ENCODE measurements at regions of chr22 and their contacts with region 1.

Region 1: GRCh38 chr22:31107178-31107893 is at the start of gene SELENOM:
- H3K4me3 ChIP-seq: peak within 1 kb of the TSS; percentile 39
- H3K27ac ChIP-seq: peak within 1 kb of the TSS; percentile 40; the same call in 1 of the 2 replicates
- H3K4me1 ChIP-seq: peaks cover 4% of the 10 kb centered on the region; the same call in 1 of the 2 replicates
- CTCF ChIP-seq: peak; percentile 95

Region 2: GRCh38 chr22:30754971-30755756 is 352.2 kb before region 1 on chr22:
- CTCF ChIA-PET with region 1: no interaction called
- POLR2A ChIA-PET with region 1: no interaction called
- H3K4me3 ChIP-seq: no peak overlapping the region
- H3K27ac ChIP-seq: no peak overlapping the region
- H3K4me1 ChIP-seq: no peaks in the 10 kb centered on the region
- CTCF ChIP-seq: peak; percentile 45; the same call in 1 of the 2 replicates

Region 3: GRCh38 chr22:30968924-30969539 is 138.3 kb before region 1 on chr22 and contains the start of gene TUG1:
- CTCF ChIA-PET with region 1: interaction called, 5 read pairs
- POLR2A ChIA-PET with region 1: interaction called, 14 read pairs
- H3K4me3 ChIP-seq: peak within 1 kb of the TSS; percentile 82
- H3K27ac ChIP-seq: peak within 1 kb of the TSS; percentile 95
- H3K4me1 ChIP-seq: peaks cover 5% of the 10 kb centered on the region; the same call in 1 of the 2 replicates
- CTCF ChIP-seq: no peak

Region 4: GRCh38 chr22:31029276-31029675 is 78.1 kb before region 1 on chr22:
- CTCF ChIA-PET with region 1: no interaction called
- POLR2A ChIA-PET with region 1: no interaction called
- H3K4me3 ChIP-seq: no peak overlapping the region
- H3K27ac ChIP-seq: no peak overlapping the region
- H3K4me1 ChIP-seq: no peaks in the 10 kb centered on the region
- CTCF ChIP-seq: no peak

Region 5: DNA sequence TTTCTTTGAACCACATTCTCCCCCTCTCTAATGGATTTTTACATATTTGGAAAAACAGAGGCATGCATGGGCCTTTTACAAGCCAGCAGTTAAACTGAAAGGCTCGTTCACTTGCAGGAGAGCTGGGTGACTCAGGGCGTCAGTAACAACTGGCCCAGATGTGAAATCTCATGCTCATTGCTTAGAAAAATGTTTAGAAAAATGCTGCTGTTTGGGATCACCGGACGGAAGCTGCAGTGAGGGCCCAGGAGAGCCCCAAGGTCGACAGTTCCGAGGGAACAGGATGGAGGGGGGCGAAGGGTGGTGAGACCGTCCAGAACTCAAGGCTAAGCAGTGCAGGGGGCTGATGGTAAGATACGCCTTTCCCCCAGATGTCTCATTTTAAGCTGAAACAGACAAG is 67.9 kb before region 1 on chr22:
- CTCF ChIA-PET with region 1: no interaction called
- POLR2A ChIA-PET with region 1: no interaction called
- H3K4me3 ChIP-seq: no peak overlapping the region
- H3K27ac ChIP-seq: no peak overlapping the region
- H3K4me1 ChIP-seq: no peaks in the 10 kb centered on the region
- CTCF ChIP-seq: no peak

Region 6: DNA sequence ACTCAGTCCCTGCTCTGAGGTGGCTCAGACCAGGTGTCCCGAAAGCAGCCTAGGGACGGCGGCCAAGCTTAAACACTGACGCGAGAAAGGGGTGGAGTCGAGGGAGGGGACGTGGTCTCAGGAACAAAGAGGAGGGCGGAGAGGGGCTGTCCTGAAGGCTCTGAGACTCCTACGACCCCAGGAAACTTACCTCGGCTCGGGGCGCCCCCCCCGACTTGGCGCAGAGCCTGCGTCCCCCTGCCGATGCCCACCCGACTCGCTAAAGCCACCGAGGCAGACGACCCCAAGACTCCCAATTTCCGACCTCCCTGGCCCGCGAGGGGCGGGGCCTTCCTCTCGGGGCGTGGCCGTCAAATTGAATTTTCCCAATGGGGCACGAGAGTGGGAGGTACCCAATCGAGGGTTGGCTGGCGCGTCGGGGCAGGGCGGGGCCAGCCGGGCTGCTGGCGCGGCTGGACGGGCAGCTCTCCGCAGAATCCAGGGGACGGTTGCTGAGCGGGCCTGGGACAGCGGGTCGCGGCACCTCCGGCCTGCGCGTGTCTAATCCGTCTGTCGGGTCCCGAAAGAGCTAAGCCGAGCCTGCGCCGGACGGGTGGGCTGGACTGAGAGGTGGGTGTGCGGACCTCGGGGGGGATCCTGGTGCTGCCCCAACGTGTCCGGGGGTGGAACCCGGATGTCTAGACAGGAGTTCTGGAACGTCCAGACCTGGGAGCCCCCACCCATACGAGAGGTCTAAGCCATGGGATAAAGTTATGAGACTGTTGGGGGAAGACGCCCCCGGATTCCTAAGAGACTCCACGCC is 26.3 kb before region 1 on chr22 and contains the start of gene SMTN:
- CTCF ChIA-PET with region 1: interaction called, 3 read pairs
- POLR2A ChIA-PET with region 1: interaction called, 15 read pairs
- H3K4me3 ChIP-seq: peak within 1 kb of the TSS; percentile 60
- H3K27ac ChIP-seq: no peak within 1 kb of the TSS
- H3K4me1 ChIP-seq: peaks cover 3% of the 10 kb centered on the region; the same call in 1 of the 2 replicates
- CTCF ChIP-seq: no peak

Region 7: GRCh38 chr22:31096657-31097279 is 10.6 kb before region 1 on chr22:
- CTCF ChIA-PET with region 1: interaction called, 22 read pairs
- POLR2A ChIA-PET with region 1: interaction called, 5 read pairs
- H3K4me3 ChIP-seq: no peak overlapping the region
- H3K27ac ChIP-seq: no peak overlapping the region
- H3K4me1 ChIP-seq: no peaks in the 10 kb centered on the region
- CTCF ChIP-seq: no peak

Region 8: DNA sequence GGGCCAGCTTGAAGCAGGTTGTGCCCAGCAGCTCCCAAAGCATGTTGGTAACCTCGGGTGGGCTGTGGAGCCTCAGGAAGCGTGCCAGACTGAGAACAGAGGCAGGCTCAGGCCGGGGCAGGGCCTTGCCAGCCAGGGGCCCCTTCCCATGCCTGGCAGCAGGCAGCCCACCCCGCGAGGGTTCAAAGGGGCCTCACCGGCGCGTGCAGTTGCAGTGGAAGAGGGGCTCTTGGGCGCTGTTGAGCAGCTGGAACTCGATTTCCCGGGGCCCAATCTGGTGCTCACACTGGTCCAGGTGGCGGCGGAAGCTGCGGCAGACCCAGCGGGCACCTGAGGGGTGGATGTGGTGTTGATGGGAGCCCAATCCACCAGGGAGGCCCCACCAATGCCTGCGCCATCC is 29.4 kb after region 1 on chr22:
- CTCF ChIA-PET with region 1: interaction called, 10 read pairs
- POLR2A ChIA-PET with region 1: interaction called, 4 read pairs
- H3K4me3 ChIP-seq: no peak overlapping the region
- H3K27ac ChIP-seq: no peak overlapping the region
- H3K4me1 ChIP-seq: peaks cover 4% of the 10 kb centered on the region
- CTCF ChIP-seq: no peak

Region 9: GRCh38 chr22:31148953-31149627 is 41.8 kb after region 1 on chr22:
- CTCF ChIA-PET with region 1: interaction called, 54 read pairs
- POLR2A ChIA-PET with region 1: interaction called, 5 read pairs
- H3K4me3 ChIP-seq: no peak overlapping the region
- H3K27ac ChIP-seq: no peak overlapping the region
- H3K4me1 ChIP-seq: no peaks in the 10 kb centered on the region
- CTCF ChIP-seq: peak; percentile 94

Region 10: DNA sequence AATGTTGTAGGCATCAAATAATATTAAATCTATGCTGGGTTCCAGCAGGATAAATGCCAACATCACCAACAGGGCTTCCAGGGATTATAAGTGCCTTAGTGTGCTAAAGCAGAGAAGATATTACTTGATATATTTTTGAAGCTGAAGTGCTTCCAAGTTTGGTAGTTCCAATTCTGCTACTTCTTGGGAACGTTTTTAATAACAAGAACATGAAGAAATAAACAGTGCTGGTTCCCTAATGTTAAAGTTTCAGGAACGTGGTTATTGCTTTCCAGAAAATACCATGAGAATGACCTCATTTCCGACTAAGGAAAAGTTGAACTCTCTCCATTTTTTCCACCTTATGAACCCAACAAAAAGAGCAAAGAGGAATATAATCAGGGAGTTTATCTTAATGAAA is 48.1 kb after region 1 on chr22:
- CTCF ChIA-PET with region 1: interaction called, 17 read pairs
- POLR2A ChIA-PET with region 1: interaction called, 8 read pairs
- H3K4me3 ChIP-seq: no peak overlapping the region
- H3K27ac ChIP-seq: no peak overlapping the region
- H3K4me1 ChIP-seq: no peaks in the 10 kb centered on the region
- CTCF ChIP-seq: no peak

Region 11: GRCh38 chr22:31367426-31367825 is 260.1 kb after region 1 on chr22:
- CTCF ChIA-PET with region 1: no interaction called
- POLR2A ChIA-PET with region 1: no interaction called
- H3K4me3 ChIP-seq: no peak overlapping the region
- H3K27ac ChIP-seq: no peak overlapping the region
- H3K4me1 ChIP-seq: no peaks in the 10 kb centered on the region
- CTCF ChIP-seq: no peak

Measured in HEK293 (cell line).